ENCODE measurements at regions of chr2 and their contacts with region 1.

Region 1: GRCh38 chr2:131154071-131154531 is 49.0 kb downstream of the PLEKHB2 start:
- DNase-seq: peak; percentile 33
- ATAC-seq: peak; percentile 91
- H3K4me3 ChIP-seq: no peak overlapping the region
- H3K27ac ChIP-seq: no peak overlapping the region
- H3K4me1 ChIP-seq: peaks cover 0 to 12% of the 10 kb centered on the region in 2 experiments; a peak in 2 of 4 replicates
- H3K27me3 ChIP-seq: no peaks in the 10 kb centered on the region
- CTCF ChIP-seq: peak; percentile 87 to 95 (median 87)
- POLR2A ChIP-seq: no peak
- RAD21 ChIP-seq: peak; percentile 96

Region 2: DNA sequence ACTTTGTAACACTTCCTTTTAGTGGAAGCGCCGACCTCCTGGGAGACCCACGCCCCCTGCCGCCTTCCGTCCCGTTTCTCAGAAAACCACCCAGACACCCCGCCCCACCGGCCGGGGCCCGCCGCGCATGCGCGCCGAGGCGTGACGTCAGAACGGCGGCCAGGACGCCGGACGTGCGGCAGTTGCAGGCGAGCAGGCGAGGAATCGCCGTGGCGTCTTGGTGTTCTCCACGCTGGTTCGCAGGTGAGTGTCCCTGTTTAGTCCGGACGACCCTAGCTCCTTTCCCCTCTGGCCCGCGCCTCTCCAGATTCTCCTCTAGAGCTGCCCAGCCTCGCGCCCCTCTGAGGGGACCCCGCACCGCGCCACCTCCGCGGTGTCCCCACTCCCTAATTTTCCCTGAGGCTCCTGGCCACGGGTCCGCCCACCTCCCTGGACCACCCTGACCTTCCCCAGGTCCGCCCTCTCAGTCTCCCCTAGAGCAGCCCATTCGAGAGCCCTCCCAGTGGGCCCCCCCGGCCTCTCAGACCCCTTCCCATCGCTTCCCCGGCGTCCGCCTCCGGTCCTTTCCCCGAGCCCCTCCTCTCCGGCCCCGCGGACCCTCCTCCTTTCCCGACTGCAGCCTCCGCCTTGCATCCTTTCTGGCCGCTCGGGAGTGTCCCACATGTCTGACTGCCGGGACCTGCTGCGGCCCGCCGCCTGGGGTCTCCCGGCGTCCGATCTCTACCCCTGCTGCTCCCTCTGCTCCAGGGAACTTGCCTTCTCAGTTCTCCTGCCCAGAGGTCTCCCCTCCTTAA is 48.7 kb before region 1 on chr2 and contains the start of gene PLEKHB2:
- CTCF ChIA-PET with region 1: no interaction called
- POLR2A ChIA-PET with region 1: no interaction called
- RAD21 ChIA-PET with region 1: no interaction called
- intact Hi-C with region 1: no loop called
- DNase-seq: peak; percentile 83
- ATAC-seq: peak; percentile 83
- H3K4me3 ChIP-seq: peak within 1 kb of the TSS; percentile 91 to 97
- H3K27ac ChIP-seq: peak within 1 kb of the TSS; percentile 81
- H3K4me1 ChIP-seq: peaks cover 13 to 18% of the 10 kb centered on the region in 2 experiments
- H3K27me3 ChIP-seq: no peaks in the 10 kb centered on the region
- CTCF ChIP-seq: no peak
- POLR2A ChIP-seq: peak; percentile 89
- RAD21 ChIP-seq: no peak; the same call in 1 of the 2 replicates
- total RNA-seq, gene PLEKHB2: 94.8 TPM

Region 3: GRCh38 chr2:131389657-131390056 is 235.6 kb after region 1 on chr2:
- CTCF ChIA-PET with region 1: no interaction called
- POLR2A ChIA-PET with region 1: no interaction called
- RAD21 ChIA-PET with region 1: no interaction called
- intact Hi-C with region 1: no loop called
- DNase-seq: no peak
- ATAC-seq: no peak
- H3K4me3 ChIP-seq: no peak overlapping the region
- H3K27ac ChIP-seq: no peak overlapping the region
- H3K4me1 ChIP-seq: no peaks in the 10 kb centered on the region
- H3K27me3 ChIP-seq: 0 out of 2 replicates have a peak, but pooled peaks cover 3% of the 10 kb centered on the region
- CTCF ChIP-seq: no peak
- POLR2A ChIP-seq: no peak
- RAD21 ChIP-seq: no peak

Region 4: DNA sequence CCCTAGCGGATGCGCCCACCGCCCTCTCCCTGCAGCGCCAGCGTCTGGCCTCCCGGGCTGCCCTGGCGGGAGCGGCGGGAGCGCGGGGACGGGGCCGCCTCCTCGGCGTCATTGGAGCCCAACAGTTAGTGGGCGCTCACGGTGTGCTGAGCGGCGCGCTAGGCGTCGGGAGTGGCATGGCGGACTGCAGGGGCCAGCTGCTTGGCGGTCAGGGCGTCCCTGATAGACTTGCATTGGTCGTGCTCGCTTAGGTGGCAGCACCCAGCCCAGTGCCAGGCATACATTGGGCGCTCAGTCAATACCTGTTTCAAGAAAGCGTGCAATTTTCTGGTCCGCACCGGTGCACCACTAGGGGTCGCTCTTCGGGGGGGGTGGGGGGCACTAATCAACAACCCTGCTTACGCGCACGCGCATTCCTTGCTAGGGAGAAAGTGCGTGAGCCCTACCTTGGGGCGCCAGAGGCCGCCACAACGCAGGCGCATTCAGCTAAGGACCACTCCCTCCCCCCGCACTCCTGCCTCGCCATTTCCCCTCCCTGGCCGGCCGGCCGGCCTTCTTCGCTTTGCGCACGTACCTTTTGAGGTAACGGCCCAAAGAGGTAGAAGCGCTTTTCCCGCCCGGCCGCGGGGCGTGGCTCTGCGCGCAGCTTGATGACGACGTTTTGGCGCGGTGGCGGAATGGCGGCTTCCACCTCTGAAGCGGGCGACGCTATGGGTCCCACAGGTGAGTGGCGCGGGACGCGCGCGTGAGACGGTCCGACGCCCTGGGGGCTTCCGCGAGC is 338.5 kb after region 1 on chr2:
- CTCF ChIA-PET with region 1: no interaction called
- POLR2A ChIA-PET with region 1: no interaction called
- RAD21 ChIA-PET with region 1: no interaction called
- intact Hi-C with region 1: loop called (anchors 2 kb)
- DNase-seq: peak; percentile 95
- ATAC-seq: peak; percentile 83
- H3K4me3 ChIP-seq: peak overlapping the region; percentile 90 to 93
- H3K27ac ChIP-seq: peak overlapping the region; percentile 84
- H3K4me1 ChIP-seq: peaks cover 2 to 26% of the 10 kb centered on the region in 2 experiments; a peak in 2 of 4 replicates
- H3K27me3 ChIP-seq: no peaks in the 10 kb centered on the region
- CTCF ChIP-seq: peak; percentile 74 to 93 (median 89)
- POLR2A ChIP-seq: no peak
- RAD21 ChIP-seq: peak; percentile 7

Region 5: GRCh38 chr2:131673392-131674173 is 519.5 kb after region 1 on chr2:
- CTCF ChIA-PET with region 1: interaction called, 10 read pairs
- POLR2A ChIA-PET with region 1: no interaction called
- RAD21 ChIA-PET with region 1: interaction called in 1 of 2 experiments, 3 read pairs
- intact Hi-C with region 1: loop called (anchors 5 kb)
- DNase-seq: peak; percentile 48
- ATAC-seq: peak; percentile 91
- H3K4me3 ChIP-seq: no peak overlapping the region
- H3K27ac ChIP-seq: no peak overlapping the region; the same call in 1 of the 2 replicates
- H3K4me1 ChIP-seq: peaks cover 7 to 31% of the 10 kb centered on the region in 2 experiments; a peak in 3 of 4 replicates
- H3K27me3 ChIP-seq: no peaks in the 10 kb centered on the region
- CTCF ChIP-seq: peak; percentile 76 to 92 (median 77)
- POLR2A ChIP-seq: no peak
- RAD21 ChIP-seq: peak; percentile 85

Region 6: GRCh38 chr2:131801210-131801744 is 647.2 kb after region 1 on chr2:
- CTCF ChIA-PET with region 1: interaction called, 3 read pairs
- POLR2A ChIA-PET with region 1: no interaction called
- RAD21 ChIA-PET with region 1: no interaction called
- intact Hi-C with region 1: loop called (anchors 5 kb)
- DNase-seq: no peak
- ATAC-seq: no peak
- H3K4me3 ChIP-seq: no peak overlapping the region
- H3K27ac ChIP-seq: no peak overlapping the region
- H3K4me1 ChIP-seq: peaks cover 0 to 7% of the 10 kb centered on the region in 2 experiments; a peak in 3 of 4 replicates
- H3K27me3 ChIP-seq: no peaks in the 10 kb centered on the region
- CTCF ChIP-seq: no peak
- POLR2A ChIP-seq: no peak
- RAD21 ChIP-seq: no peak